Mammary epithelial cell (primary cell): ENCODE measurements at regions of chr21 and their contacts with region 1.

Region 1: GRCh38 chr21:32653311-32653901 is 41.2 kb upstream of the CFAP298 start:
- DNase-seq: peak; percentile 3
- H3K4me3 ChIP-seq: no peak overlapping the region
- H3K27ac ChIP-seq: no peak overlapping the region
- H3K4me1 ChIP-seq: no peaks in the 10 kb centered on the region
- H3K27me3 ChIP-seq: no peaks in the 10 kb centered on the region
- CTCF ChIP-seq: peak; percentile 55 to 65

Region 2: GRCh38 chr21:32770871-32771523 is 117.6 kb after region 1 on chr21:
- CTCF ChIA-PET with region 1: no interaction called
- dilution Hi-C with region 1: no loop called
- in situ Hi-C with region 1: no loop called
- intact Hi-C with region 1: loop called (anchors 5 kb)
- DNase-seq: peak; percentile 62
- H3K4me3 ChIP-seq: peak overlapping the region; percentile 59 to 84 (median 73)
- H3K27ac ChIP-seq: peak overlapping the region; percentile 67
- H3K4me1 ChIP-seq: peaks cover 10% of the 10 kb centered on the region
- H3K27me3 ChIP-seq: no peaks in the 10 kb centered on the region
- CTCF ChIP-seq: peak in 1 of 2 donors; percentile 10

Region 3: GRCh38 chr21:32826329-32827167 is 173.1 kb after region 1 on chr21:
- CTCF ChIA-PET with region 1: interaction called, 3 read pairs
- dilution Hi-C with region 1: no loop called
- in situ Hi-C with region 1: loop called (anchors 10 kb)
- intact Hi-C with region 1: loop called (anchors 1 kb)
- DNase-seq: peak; percentile 38
- H3K4me3 ChIP-seq: no peak overlapping the region
- H3K27ac ChIP-seq: no peak overlapping the region
- H3K4me1 ChIP-seq: no peaks in the 10 kb centered on the region
- H3K27me3 ChIP-seq: no peaks in the 10 kb centered on the region
- CTCF ChIP-seq: peak; percentile 50 to 74

Region 4: GRCh38 chr21:32844653-32845436 is 191.4 kb after region 1 on chr21:
- CTCF ChIA-PET with region 1: no interaction called
- dilution Hi-C with region 1: no loop called
- in situ Hi-C with region 1: no loop called
- intact Hi-C with region 1: no loop called
- DNase-seq: peak; percentile 60
- H3K4me3 ChIP-seq: no peak overlapping the region
- H3K27ac ChIP-seq: no peak overlapping the region
- H3K4me1 ChIP-seq: no peaks in the 10 kb centered on the region
- H3K27me3 ChIP-seq: peaks cover 5% of the 10 kb centered on the region
- CTCF ChIP-seq: no peak

Region 5: DNA sequence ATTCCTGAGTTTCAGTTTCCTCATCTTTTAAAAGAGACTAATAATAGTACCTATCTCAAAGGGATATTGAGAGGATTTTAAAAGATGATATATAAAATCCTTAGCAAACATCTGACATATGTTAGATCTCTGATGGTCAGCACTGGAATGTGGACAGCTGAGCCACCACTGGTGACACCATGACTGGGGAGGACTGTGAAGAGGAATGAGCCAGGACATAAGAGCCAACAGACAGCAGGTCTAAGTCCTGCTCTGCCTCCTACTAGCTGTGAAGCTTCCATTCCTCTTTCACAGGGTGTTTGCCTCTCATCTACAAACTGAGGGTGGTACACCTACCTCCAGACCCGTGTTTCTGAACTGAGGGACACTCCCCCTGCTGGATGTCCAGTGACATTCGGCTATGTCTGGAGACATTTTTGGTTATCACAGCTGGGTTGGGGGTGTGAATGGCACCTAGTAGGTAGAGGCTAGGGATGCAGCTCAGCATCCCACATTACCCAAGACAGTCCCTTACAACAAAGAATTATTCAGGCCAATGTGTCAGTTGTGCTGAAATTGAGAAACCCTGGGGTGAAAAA is 263.2 kb after region 1 on chr21:
- CTCF ChIA-PET with region 1: no interaction called
- dilution Hi-C with region 1: no loop called
- in situ Hi-C with region 1: no loop called
- intact Hi-C with region 1: loop called (anchors 5 kb)
- DNase-seq: no peak
- H3K4me3 ChIP-seq: no peak overlapping the region
- H3K27ac ChIP-seq: no peak overlapping the region
- H3K4me1 ChIP-seq: no peaks in the 10 kb centered on the region
- H3K27me3 ChIP-seq: peaks cover 2% of the 10 kb centered on the region
- CTCF ChIP-seq: peak; percentile 15 to 18